T-cell (primary cell): ENCODE measurements at regions of chr11 and their contacts with region 1.

Region 1: GRCh38 chr11:67167086-67167485 is 48.0 kb downstream of the KDM2A start:
- DNase-seq: no peak
- ATAC-seq: no peak
- H3K4me3 ChIP-seq: no peak overlapping the region
- H3K4me3 Mint-ChIP-seq: no peak overlapping the region
- H3K27ac ChIP-seq: no peak overlapping the region
- H3K27ac Mint-ChIP-seq: no peak overlapping the region
- H3K4me1 ChIP-seq: peaks cover 0 to 3% of the 10 kb centered on the region in 2 experiments
- H3K4me1 Mint-ChIP-seq: peaks cover 53 to 57% (median 54%) of the 10 kb centered on the region in 3 donors
- H3K27me3 ChIP-seq: no peaks in the 10 kb centered on the region
- H3K27me3 Mint-ChIP-seq: no peaks in the 10 kb centered on the region

Region 2: GRCh38 chr11:67039989-67040546 is 127.0 kb before region 1 on chr11:
- CTCF ChIA-PET with region 1: no interaction called
- POLR2A ChIA-PET with region 1: no interaction called
- DNase-seq: no peak
- ATAC-seq: no peak
- H3K4me3 ChIP-seq: no peak overlapping the region
- H3K4me3 Mint-ChIP-seq: no peak overlapping the region
- H3K27ac ChIP-seq: no peak overlapping the region
- H3K27ac Mint-ChIP-seq: no peak overlapping the region
- H3K4me1 ChIP-seq: no peaks in the 10 kb centered on the region
- H3K4me1 Mint-ChIP-seq: no peaks in the 10 kb centered on the region
- H3K27me3 ChIP-seq: peaks cover 0 to 51% of the 10 kb centered on the region in 2 experiments
- H3K27me3 Mint-ChIP-seq: peaks cover 3 to 21% of the 10 kb centered on the region in 2 donors

Region 3: GRCh38 chr11:67071420-67072284 is 95.4 kb before region 1 on chr11:
- CTCF ChIA-PET with region 1: interaction called in 1 of 2 experiments, 11 read pairs
- POLR2A ChIA-PET with region 1: interaction called in 1 of 2 experiments, 9 read pairs
- DNase-seq: peak; percentile 11 to 79 (median 60)
- ATAC-seq: peak; percentile 85 to 92 (median 92)
- H3K4me3 ChIP-seq: peak overlapping the region; percentile 8 to 66
- H3K4me3 Mint-ChIP-seq: peak overlapping the region; percentile 44 to 58 (median 50)
- H3K27ac ChIP-seq: no peak overlapping the region
- H3K27ac Mint-ChIP-seq: no peak overlapping the region
- H3K4me1 ChIP-seq: peaks cover 0 to 9% of the 10 kb centered on the region in 2 experiments
- H3K4me1 Mint-ChIP-seq: peaks cover 3 to 6% (median 4%) of the 10 kb centered on the region in 3 donors
- H3K27me3 ChIP-seq: peaks cover 0 to 28% of the 10 kb centered on the region in 2 experiments
- H3K27me3 Mint-ChIP-seq: peaks cover 0 to 4% of the 10 kb centered on the region in 2 donors

Region 4: GRCh38 chr11:67083786-67084366 is 83.2 kb before region 1 on chr11:
- CTCF ChIA-PET with region 1: interaction called, 4 to 11 read pairs
- POLR2A ChIA-PET with region 1: no interaction called
- DNase-seq: no peak
- ATAC-seq: no peak
- H3K4me3 ChIP-seq: no peak overlapping the region
- H3K4me3 Mint-ChIP-seq: no peak overlapping the region
- H3K27ac ChIP-seq: no peak overlapping the region
- H3K27ac Mint-ChIP-seq: no peak overlapping the region
- H3K4me1 ChIP-seq: peaks cover 3 to 12% of the 10 kb centered on the region in 2 experiments
- H3K4me1 Mint-ChIP-seq: peaks cover 7 to 12% (median 12%) of the 10 kb centered on the region in 3 donors
- H3K27me3 ChIP-seq: peaks cover 0 to 21% of the 10 kb centered on the region in 2 experiments
- H3K27me3 Mint-ChIP-seq: peaks cover 0 to 6% of the 10 kb centered on the region in 2 donors

Region 5: DNA sequence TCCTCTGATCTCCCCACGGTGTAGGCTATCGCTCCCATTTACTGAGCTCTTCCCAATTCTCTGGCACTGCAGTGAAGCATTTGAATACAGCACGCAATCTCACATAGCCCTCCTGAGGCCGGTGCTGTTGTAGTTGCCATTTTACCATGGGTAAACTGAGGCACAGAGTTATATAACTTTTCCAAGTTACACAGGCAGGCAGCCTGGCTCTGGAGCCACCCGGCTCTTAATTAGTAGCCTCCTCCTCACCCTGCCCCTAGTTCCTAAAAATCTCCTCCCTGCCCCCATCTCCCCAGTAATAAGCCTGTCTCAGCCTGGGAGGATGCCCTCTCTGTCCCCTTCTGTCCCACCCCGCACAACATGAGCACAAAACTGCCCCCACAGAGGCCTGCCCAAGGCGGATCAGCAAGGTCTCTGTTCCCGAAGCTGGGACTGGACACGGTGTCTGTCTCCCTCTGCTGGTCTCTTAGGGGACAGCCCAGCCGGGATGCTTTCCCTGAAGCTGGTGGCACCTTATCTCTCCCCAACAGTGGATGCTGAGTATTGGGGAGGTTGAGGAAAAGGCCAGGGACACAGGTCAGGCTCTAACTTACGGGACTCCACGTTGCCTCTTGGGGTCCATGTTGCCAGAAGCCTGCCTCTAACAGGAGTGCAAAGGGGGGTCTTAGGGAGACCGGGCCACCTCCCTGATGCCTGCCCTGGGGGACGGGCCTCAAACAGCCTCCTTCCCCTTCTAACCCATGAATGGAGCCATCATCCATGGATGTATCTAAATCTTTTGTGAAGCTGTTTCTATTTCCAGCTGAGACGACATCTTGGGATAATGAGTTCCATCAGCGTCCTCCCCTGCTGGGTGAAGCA is 215.4 kb after region 1 on chr11:
- CTCF ChIA-PET with region 1: interaction called in 1 of 2 experiments, 11 read pairs
- POLR2A ChIA-PET with region 1: no interaction called
- DNase-seq: peak; percentile 54 to 90 (median 78)
- ATAC-seq: peak; percentile 91 to 95 (median 92)
- H3K4me3 ChIP-seq: no peak overlapping the region
- H3K4me3 Mint-ChIP-seq: no peak overlapping the region
- H3K27ac ChIP-seq: no peak overlapping the region
- H3K27ac Mint-ChIP-seq: peak overlapping the region in 1 of 2 donors; percentile 19
- H3K4me1 ChIP-seq: peaks cover 0 to 8% of the 10 kb centered on the region in 2 experiments
- H3K4me1 Mint-ChIP-seq: peaks cover 5 to 13% (median 5%) of the 10 kb centered on the region in 3 donors
- H3K27me3 ChIP-seq: peaks cover 0 to 14% of the 10 kb centered on the region in 2 experiments
- H3K27me3 Mint-ChIP-seq: peaks cover 3 to 8% of the 10 kb centered on the region in 2 donors